ENCODE measurements at regions of chr15 and their contacts with region 1.

Region 1: DNA sequence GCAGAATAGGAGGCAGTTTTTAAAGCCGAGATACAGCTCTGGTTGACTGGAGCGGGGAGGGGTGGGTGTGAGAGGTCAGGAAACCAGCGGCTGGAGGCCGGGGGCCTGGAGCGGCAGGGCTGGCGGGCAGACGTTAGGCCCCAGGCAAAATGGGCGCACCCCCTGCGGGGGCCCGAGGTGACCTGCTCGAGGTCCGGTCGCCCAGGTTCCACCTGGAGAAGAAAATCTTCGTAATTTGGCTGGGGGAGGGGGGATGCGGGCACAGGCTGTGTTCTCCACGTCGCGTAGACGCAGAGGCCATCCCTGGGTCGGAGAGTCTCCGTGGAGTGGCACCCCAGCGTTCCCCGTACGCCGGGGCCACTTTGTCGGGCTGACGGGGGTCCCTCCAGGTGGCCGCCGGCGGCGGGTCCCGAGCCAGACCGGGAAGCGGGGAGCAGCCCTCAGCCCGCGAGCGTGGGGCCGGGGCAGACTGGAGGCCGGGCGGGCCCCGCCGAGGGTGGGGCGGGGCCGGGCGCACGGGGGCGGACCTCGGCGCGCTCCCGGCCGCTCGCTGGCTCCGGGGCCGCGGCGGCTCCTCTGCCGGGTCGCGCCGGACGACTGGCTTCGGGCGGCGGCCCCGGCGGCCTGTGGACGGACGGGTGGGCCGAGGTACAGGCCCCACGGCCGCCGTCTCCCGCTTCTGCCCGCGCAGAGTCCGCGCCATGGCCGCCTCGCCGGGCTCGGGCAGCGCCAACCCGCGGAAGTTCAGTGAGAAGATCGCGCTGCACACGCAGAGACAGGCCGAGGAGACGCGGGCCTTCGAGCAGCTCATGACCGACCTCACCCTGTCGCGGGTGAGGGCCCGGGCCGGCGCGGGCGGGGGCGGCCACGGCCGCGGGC is at the start of gene CRTC3:
- DNase-seq: peak; percentile 49
- H3K4me3 Mint-ChIP-seq: peak within 1 kb of the TSS; percentile 92
- H3K27ac Mint-ChIP-seq: peak within 1 kb of the TSS; percentile 85
- H3K4me1 Mint-ChIP-seq: peaks cover 52% of the 10 kb centered on the region
- H3K27me3 Mint-ChIP-seq: no peaks in the 10 kb centered on the region
- total RNA-seq, gene CRTC3: 54.0 and 61.2 TPM in 2 replicates

Region 2: GRCh38 chr15:90482124-90483011 is 47.2 kb before region 1 on chr15:
- intact Hi-C with region 1: no loop called
- DNase-seq: peak; percentile 11
- H3K4me3 Mint-ChIP-seq: no peak overlapping the region
- H3K27ac Mint-ChIP-seq: peak overlapping the region; percentile 13
- H3K4me1 Mint-ChIP-seq: peaks cover 43% of the 10 kb centered on the region
- H3K27me3 Mint-ChIP-seq: no peaks in the 10 kb centered on the region

Region 3: DNA sequence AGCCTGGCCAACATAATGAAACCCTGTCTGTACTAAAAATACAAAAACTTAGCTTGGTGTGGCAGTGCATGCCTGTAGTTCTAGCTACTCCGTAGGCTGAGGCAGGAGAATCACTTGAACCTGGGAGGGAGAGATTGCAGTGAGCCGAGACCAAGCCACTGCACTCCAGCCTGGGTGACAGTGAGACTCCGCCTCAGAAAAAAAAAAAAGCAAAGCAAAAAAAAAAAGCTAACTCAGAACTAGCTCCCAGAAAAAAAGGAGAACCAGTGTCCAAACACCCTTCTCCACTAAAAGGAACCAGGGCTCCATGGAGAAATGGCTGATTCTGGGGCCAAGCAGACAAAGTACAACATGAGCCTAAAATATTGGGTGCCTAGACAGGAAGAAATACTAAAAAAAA is 16.6 kb before region 1 on chr15:
- intact Hi-C with region 1: loop called (anchors 2 kb)
- DNase-seq: no peak
- H3K4me3 Mint-ChIP-seq: no peak overlapping the region
- H3K27ac Mint-ChIP-seq: no peak overlapping the region
- H3K4me1 Mint-ChIP-seq: peaks cover 11% of the 10 kb centered on the region
- H3K27me3 Mint-ChIP-seq: no peaks in the 10 kb centered on the region

Region 4: GRCh38 chr15:90539789-90540188 is 10.2 kb after region 1 on chr15:
- intact Hi-C with region 1: loop called (anchors 1 kb)
- DNase-seq: no peak
- H3K4me3 Mint-ChIP-seq: peak overlapping the region; percentile 88
- H3K27ac Mint-ChIP-seq: peak overlapping the region; percentile 97
- H3K4me1 Mint-ChIP-seq: peaks cover 81% of the 10 kb centered on the region
- H3K27me3 Mint-ChIP-seq: no peaks in the 10 kb centered on the region

Region 5: DNA sequence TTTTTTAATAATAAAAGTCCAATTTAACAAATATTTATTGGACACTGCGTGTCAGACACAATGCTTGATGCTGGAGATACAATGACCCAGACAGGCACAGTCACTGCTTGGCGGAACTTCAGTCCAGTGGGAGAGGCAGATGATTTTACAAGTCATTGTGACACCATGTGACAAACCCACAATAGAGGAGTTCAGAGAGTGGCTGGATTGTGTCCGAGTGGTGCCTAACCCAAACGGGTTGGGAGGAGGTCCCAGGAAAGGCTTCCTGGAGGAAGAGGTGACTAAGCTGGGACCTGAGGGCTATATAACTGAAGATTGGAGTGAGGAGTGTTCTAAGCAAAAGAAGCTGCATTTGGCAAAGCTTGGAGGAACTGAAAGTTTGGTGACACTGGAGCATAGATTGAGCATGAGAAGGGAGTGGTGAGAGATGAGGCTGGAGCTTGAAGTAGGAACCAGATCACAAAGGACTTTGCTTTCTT is 41.5 kb after region 1 on chr15:
- intact Hi-C with region 1: loop called (anchors 1 kb)
- DNase-seq: no peak
- H3K4me3 Mint-ChIP-seq: peak overlapping the region; percentile 38
- H3K27ac Mint-ChIP-seq: peak overlapping the region; percentile 64
- H3K4me1 Mint-ChIP-seq: peaks cover 92% of the 10 kb centered on the region
- H3K27me3 Mint-ChIP-seq: no peaks in the 10 kb centered on the region

Region 6: GRCh38 chr15:90594301-90594701 is 64.7 kb after region 1 on chr15:
- intact Hi-C with region 1: loop called (anchors 2 kb)
- DNase-seq: peak; percentile 75
- H3K4me3 Mint-ChIP-seq: peak overlapping the region; percentile 81
- H3K27ac Mint-ChIP-seq: peak overlapping the region; percentile 99
- H3K4me1 Mint-ChIP-seq: peaks cover 79% of the 10 kb centered on the region
- H3K27me3 Mint-ChIP-seq: no peaks in the 10 kb centered on the region

Region 7: GRCh38 chr15:90620379-90621067 is 90.9 kb after region 1 on chr15:
- intact Hi-C with region 1: loop called (anchors 5 kb)
- DNase-seq: no peak
- H3K4me3 Mint-ChIP-seq: peak overlapping the region; percentile 21
- H3K27ac Mint-ChIP-seq: peak overlapping the region; percentile 83
- H3K4me1 Mint-ChIP-seq: peaks cover 37% of the 10 kb centered on the region
- H3K27me3 Mint-ChIP-seq: no peaks in the 10 kb centered on the region

Measured in activated T-helper 1 cell treated with anti-CD3 and anti-CD28 coated beads, Interleukin-12 subunit alpha, Interleukin-12 subunit beta, Interleukin-2, Interleukin-4 antibody, amounts not matched to agents 30 ng/mL and 10 ng/mL and 1 ng/mL, durations not matched to agents 14 hours and 24 hours and 36 hours (primary cell).